ENCODE measurements at regions of chr7 and their contacts with region 1.

Region 1: GRCh38 chr7:106126170-106126938 is 14.2 kb upstream of the SYPL1 start:
- DNase-seq: no peak
- H3K4me3 ChIP-seq: no peak overlapping the region
- CTCF ChIP-seq: no peak

Region 2: GRCh38 chr7:105413887-105414437 is 712.4 kb before region 1 on chr7:
- CTCF ChIA-PET with region 1: no interaction called
- POLR2A ChIA-PET with region 1: no interaction called
- DNase-seq: no peak
- H3K4me3 ChIP-seq: no peak overlapping the region
- CTCF ChIP-seq: no peak

Region 3: GRCh38 chr7:105990726-105991453 is 135.5 kb before region 1 on chr7:
- CTCF ChIA-PET with region 1: no interaction called
- POLR2A ChIA-PET with region 1: no interaction called
- DNase-seq: no peak
- H3K4me3 ChIP-seq: no peak overlapping the region
- CTCF ChIP-seq: no peak

Region 4: DNA sequence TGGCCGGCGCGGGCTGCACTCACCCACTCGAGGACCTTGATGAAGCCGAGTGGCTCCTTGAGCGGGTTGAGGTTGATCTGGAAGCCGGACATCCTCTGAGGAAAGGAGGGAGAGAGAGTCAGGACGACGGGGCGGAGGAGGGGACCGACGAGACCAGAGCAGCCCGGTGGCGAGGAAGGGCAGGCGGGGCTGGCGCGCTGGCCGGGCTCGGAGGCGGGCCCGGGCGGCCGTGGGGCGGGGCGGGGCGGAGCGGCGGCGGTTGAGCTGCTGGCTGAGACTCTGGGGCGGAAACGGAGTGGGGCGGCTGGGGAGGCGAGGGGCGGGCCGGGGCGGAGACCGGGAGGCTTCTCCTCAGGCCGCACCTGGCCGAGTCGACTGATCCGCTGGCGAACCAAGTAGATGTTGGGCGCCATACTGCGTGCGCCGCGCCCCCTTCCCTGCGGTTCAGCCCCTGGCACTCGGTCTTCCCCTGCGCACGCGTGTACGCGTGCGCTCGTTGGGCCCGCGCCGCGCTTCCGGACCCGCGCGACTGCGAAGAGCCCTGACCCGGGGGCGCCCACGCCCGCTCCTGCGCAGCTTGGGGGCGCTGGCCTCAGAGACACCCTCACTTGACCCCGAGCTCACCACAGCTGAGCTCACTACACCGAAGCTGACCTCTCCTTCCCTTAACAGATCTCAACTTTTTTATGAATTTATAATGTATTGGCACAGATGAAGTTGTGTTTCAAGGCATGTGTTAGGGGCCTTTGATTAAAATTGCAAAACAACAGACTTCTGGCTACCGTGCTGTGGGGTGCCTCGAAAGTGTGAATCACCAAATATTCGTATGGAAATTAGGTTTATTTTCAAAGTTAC is 14.0 kb before region 1 on chr7 and contains the start of gene SYPL1:
- CTCF ChIA-PET with region 1: interaction called, 4 read pairs
- POLR2A ChIA-PET with region 1: interaction called, 10 read pairs
- DNase-seq: peak; percentile 49
- H3K4me3 ChIP-seq: peak within 1 kb of the TSS; percentile 80
- CTCF ChIP-seq: no peak

Measured in AG04449 (cell line).